ENCODE measurements at regions of chr13 and their contacts with region 1.

Region 1: GRCh38 chr13:21033212-21033840 is 28.1 kb downstream of the LATS2 start:
- DNase-seq: no peak
- H3K4me3 ChIP-seq: no peak overlapping the region
- H3K27ac ChIP-seq: no peak overlapping the region
- H3K4me1 ChIP-seq: peaks cover 4 to 9% (median 5%) of the 10 kb centered on the region in 4 experiments
- H3K27me3 ChIP-seq: no peaks in the 10 kb centered on the region
- CTCF ChIP-seq: no peak
- EP300 ChIP-seq: no peak
- POLR2A ChIP-seq: no peak
- RAD21 ChIP-seq: no peak

Region 2: DNA sequence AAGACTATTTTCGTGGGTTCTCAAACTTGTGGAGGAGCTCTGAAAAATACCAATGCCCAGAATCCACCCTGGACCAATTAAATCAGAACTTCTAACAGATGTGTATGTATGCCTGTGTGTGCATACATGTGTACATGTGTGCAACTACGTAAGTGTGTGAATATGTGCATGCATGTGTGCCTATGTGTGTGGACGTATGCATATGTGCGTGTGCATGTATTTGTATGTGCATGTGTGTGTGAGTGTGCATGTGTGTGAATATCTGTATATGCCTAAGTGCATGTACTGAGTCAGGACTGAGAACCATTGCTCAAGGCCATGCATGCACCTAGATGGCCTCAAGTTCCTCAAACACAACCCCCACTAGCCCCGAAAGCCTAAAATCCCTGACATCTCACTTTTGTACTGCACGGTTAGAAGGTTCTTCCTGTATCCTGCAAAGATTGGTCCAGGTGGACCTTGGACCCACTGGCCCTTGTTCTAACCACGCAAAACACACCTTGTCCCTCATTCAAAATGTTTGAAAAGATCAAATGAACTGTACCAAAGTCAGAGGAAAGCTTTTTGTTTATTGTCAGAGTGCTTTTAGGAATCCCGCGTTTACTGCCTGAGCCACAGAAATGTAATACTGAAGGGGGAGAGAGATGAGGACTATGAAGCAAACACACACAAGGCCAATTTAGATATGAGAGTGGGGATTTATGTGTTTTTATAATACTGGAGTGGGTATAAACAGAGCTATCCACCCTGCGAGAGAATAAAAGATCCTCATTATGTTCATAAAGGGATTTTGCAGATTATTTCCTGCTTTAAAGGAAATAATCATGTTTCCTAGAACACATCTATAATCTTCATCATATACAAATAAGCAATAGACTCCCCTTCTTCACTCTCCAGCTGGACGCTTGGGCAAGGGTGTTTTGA is 11.0 kb before region 1 on chr13:
- CTCF ChIA-PET with region 1: interaction called, 5 read pairs
- POLR2A ChIA-PET with region 1: interaction called, 10 read pairs
- DNase-seq: no peak
- H3K4me3 ChIP-seq: no peak overlapping the region
- H3K27ac ChIP-seq: no peak overlapping the region
- H3K4me1 ChIP-seq: peaks cover 0 to 4% (median 2%) of the 10 kb centered on the region in 4 experiments; a peak in 2 of 7 replicates
- H3K27me3 ChIP-seq: no peaks in the 10 kb centered on the region
- CTCF ChIP-seq: no peak
- EP300 ChIP-seq: no peak
- POLR2A ChIP-seq: no peak
- RAD21 ChIP-seq: no peak

Region 3: DNA sequence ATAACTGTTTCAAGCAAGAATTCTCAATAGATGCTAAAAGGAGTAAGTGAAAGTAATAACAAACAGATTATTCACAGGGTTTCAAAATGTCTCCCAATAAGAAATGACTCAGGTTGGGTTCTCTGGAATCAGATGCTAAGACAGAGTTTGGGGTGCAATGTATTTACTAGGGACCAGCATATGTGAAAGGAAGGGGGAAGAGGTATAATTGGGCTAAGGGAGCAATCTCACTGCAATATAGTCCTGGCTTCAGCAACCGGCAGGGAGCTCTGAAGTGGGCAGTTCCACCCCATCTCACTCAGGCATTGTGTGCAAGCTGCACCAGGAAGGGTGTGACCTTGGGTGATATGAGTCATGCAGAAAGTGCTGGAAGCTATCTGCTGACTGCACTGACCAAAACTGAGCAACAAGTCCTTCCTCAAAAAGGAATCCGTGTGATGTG is 402.4 kb after region 1 on chr13:
- CTCF ChIA-PET with region 1: no interaction called
- POLR2A ChIA-PET with region 1: no interaction called
- DNase-seq: no peak
- H3K4me3 ChIP-seq: no peak overlapping the region
- H3K27ac ChIP-seq: no peak overlapping the region
- H3K4me1 ChIP-seq: no peaks in the 10 kb centered on the region
- H3K27me3 ChIP-seq: no peaks in the 10 kb centered on the region
- CTCF ChIP-seq: no peak
- EP300 ChIP-seq: no peak
- POLR2A ChIP-seq: no peak
- RAD21 ChIP-seq: no peak